Endothelial cell of umbilical vein (primary cell): ENCODE measurements at regions of chr15 and their contacts with region 1.

Region 1: DNA sequence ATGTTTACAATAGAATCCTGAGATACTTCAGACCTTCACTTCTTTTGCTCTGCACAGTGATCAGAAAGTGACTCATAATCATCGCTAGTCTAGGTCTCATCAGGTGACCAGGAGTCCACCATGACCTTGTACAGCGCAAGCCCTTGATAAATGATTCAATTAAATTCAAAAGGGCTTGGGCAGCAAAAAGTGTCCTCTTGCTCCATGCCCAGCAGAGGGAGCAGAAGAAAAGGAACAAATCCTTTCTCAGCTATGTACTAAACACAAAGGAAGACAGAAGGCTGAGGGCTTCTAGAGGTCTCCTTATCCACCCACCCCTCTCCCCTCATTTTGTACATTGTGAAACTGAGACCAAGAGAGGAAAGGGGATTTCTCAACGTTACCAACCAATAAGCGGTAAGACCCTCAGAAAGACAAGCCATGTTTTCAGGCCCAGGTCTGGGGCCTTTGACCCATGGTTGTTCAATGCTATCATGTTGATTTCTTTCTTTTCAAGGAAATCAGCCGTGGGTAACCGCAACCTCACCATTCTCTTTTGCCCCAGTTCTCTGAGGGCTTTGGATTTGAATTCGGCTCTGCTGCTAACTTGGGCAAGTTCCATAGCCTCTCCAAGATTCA is 74.8 kb downstream of the AQP9 start:
- DNase-seq: peak; percentile 56
- H3K4me3 ChIP-seq: no peak overlapping the region
- H3K27ac ChIP-seq: no peak overlapping the region
- H3K4me1 ChIP-seq: peaks cover 5% of the 10 kb centered on the region
- H3K27me3 ChIP-seq: no peaks in the 10 kb centered on the region
- CTCF ChIP-seq: peak; percentile 35 to 59
- POLR2A ChIP-seq: no peak

Region 2: DNA sequence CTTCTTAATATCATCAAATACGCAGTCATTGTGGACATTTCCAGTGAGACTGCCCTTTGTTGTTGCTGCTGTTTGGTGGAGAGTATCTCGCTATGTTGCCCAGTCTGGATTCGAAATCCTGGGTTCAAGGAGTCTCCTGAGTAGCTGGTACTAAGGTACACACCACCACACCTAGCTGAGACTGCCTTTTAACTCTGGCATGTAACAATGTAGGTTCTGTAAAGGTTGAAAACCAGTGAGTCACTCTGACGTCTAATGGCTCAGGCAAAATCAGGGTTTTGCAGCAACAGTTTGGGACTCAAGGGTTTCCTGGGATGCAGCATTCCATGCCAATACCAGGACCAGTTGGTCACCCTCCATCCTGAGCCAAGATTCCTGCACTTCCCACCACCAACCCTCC is 22.6 kb before region 1 on chr15:
- CTCF ChIA-PET with region 1: interaction called, 13 read pairs
- POLR2A ChIA-PET with region 1: no interaction called
- dilution Hi-C with region 1: no loop called
- intact Hi-C with region 1: no loop called
- DNase-seq: no peak
- H3K4me3 ChIP-seq: no peak overlapping the region
- H3K27ac ChIP-seq: no peak overlapping the region
- H3K4me1 ChIP-seq: no peaks in the 10 kb centered on the region
- H3K27me3 ChIP-seq: peaks cover 0 to 2% of the 10 kb centered on the region in 2 experiments
- CTCF ChIP-seq: no peak
- POLR2A ChIP-seq: no peak